Prostate gland (tissue), 2 donors: ENCODE measurements at regions of chr21 and their contacts with region 1.

Region 1: DNA sequence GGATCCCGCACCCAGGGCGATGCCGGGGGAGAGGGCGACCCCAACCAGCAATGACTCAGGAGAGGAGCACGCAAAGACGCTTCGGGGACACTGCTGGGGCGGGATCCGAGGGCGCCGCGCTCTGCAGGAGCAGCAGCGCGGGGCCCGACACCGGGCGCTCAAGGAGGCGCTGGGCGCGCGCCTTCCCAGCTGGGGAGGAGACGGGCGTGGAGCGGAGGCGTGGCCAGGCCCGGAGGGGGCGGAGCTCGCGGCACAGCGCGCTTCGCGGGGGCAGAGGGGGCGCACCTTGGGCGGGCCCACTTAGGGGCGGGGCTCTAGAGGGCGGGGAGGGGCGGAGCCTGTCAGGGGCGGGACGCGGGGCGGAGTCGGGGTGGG is 369 bp downstream of the SUMO3 start:
- DNase-seq: peak; percentile 91
- H3K4me3 ChIP-seq: peak overlapping the region; percentile 83 to 85
- H3K27ac ChIP-seq: peak overlapping the region; percentile 83 to 88
- H3K4me1 ChIP-seq: peaks cover 2% of the 10 kb centered on the region
- H3K27me3 ChIP-seq: no peaks in the 10 kb centered on the region
- CTCF ChIP-seq: no peak
- POLR2A ChIP-seq: peak; percentile 34

Region 2: GRCh38 chr21:44653656-44654575 is 163.6 kb before region 1 on chr21:
- intact Hi-C with region 1: no loop called
- DNase-seq: no peak
- H3K4me3 ChIP-seq: no peak overlapping the region
- H3K27ac ChIP-seq: no peak overlapping the region
- H3K4me1 ChIP-seq: no peaks in the 10 kb centered on the region
- H3K27me3 ChIP-seq: no peaks in the 10 kb centered on the region
- CTCF ChIP-seq: no peak
- POLR2A ChIP-seq: no peak

Region 3: GRCh38 chr21:44873356-44874239 is 56.1 kb after region 1 on chr21 and contains the start of gene PTTG1IP:
- intact Hi-C with region 1: loop called (anchors 5 kb)
- DNase-seq: peak; percentile 97
- H3K4me3 ChIP-seq: peak within 1 kb of the TSS; percentile 77 to 84
- H3K27ac ChIP-seq: peak within 1 kb of the TSS; percentile 80 to 86
- H3K4me1 ChIP-seq: peaks cover 23% of the 10 kb centered on the region
- H3K27me3 ChIP-seq: no peaks in the 10 kb centered on the region
- CTCF ChIP-seq: peak in 1 of 4 experiments; percentile 19
- POLR2A ChIP-seq: peak; percentile 84
- total RNA-seq, gene PTTG1IP: 216 to 244 TPM